AG04450 (cell line): ENCODE measurements at regions of chr1 and their contacts with region 1.

Region 1: DNA sequence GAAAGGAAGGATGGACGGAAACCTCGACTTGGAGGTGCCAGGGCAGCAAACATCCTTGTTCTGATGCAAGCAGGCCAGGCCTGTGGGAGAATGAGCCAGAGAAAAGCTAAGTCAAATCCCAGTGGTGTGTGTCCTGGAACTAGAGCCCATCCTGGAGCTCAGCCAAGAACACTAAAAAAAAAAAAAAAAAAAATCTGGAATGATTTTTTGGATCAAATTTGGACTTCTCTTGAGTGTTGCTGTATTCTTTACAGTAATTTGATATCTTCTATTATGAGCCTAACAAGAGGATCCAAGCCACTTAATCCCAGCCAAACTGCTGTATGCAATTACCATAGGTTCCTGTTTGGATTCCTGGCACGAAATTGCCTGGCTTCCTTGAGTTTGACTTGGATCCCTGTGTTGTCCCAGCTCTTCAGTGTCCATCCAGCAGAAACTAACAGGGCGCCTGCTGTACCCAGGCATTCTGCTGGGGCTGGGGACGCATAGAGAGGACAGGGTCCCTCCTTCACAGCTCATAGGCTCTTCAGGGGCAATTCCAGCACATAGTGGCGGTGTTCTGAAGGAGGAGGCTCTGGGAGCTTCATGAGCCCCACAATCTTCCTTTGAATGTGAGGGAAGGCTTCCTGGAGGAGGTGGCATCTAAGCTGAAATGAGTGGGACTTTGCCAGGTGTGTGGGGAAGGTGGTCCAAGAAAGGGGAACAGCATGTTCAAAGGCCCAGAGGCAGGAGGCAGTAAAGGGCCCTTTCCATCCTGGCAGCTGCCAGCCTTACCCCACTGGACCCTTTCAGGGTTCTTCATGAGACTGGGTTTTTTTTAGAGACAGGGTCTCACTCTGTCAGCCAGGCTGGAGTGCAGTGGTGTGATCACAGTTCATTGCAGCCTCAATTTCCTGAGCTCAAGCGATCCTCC is 24.7 kb downstream of the EPHX1 start:
- DNase-seq: no peak
- H3K4me3 ChIP-seq: no peak overlapping the region
- H3K27ac ChIP-seq: peak overlapping the region; percentile 31
- H3K27me3 ChIP-seq: no peaks in the 10 kb centered on the region
- CTCF ChIP-seq: no peak

Region 2: GRCh38 chr1:225612287-225612686 is 222.4 kb before region 1 on chr1:
- CTCF ChIA-PET with region 1: no interaction called
- POLR2A ChIA-PET with region 1: no interaction called
- DNase-seq: no peak
- H3K4me3 ChIP-seq: no peak overlapping the region
- H3K27ac ChIP-seq: no peak overlapping the region
- H3K27me3 ChIP-seq: no peaks in the 10 kb centered on the region
- CTCF ChIP-seq: no peak

Region 3: GRCh38 chr1:225694151-225694603 is 140.5 kb before region 1 on chr1:
- CTCF ChIA-PET with region 1: no interaction called
- POLR2A ChIA-PET with region 1: no interaction called
- DNase-seq: no peak
- H3K4me3 ChIP-seq: no peak overlapping the region
- H3K27ac ChIP-seq: no peak overlapping the region
- H3K27me3 ChIP-seq: no peaks in the 10 kb centered on the region
- CTCF ChIP-seq: no peak

Region 4: GRCh38 chr1:225845571-225846259 is 11.0 kb after region 1 on chr1:
- CTCF ChIA-PET with region 1: interaction called, 16 read pairs
- POLR2A ChIA-PET with region 1: no interaction called
- DNase-seq: peak; percentile 45
- H3K4me3 ChIP-seq: no peak overlapping the region
- H3K27ac ChIP-seq: no peak overlapping the region
- H3K27me3 ChIP-seq: no peaks in the 10 kb centered on the region
- CTCF ChIP-seq: peak; percentile 83

Region 5: GRCh38 chr1:225875044-225875814 is 40.6 kb after region 1 on chr1:
- CTCF ChIA-PET with region 1: no interaction called
- POLR2A ChIA-PET with region 1: no interaction called
- DNase-seq: no peak
- H3K4me3 ChIP-seq: no peak overlapping the region
- H3K27ac ChIP-seq: no peak overlapping the region
- H3K27me3 ChIP-seq: no peaks in the 10 kb centered on the region
- CTCF ChIP-seq: no peak